Transverse colon (tissue), 4 donors: ENCODE measurements at regions of chr4 and their contacts with region 1.

Region 1: DNA sequence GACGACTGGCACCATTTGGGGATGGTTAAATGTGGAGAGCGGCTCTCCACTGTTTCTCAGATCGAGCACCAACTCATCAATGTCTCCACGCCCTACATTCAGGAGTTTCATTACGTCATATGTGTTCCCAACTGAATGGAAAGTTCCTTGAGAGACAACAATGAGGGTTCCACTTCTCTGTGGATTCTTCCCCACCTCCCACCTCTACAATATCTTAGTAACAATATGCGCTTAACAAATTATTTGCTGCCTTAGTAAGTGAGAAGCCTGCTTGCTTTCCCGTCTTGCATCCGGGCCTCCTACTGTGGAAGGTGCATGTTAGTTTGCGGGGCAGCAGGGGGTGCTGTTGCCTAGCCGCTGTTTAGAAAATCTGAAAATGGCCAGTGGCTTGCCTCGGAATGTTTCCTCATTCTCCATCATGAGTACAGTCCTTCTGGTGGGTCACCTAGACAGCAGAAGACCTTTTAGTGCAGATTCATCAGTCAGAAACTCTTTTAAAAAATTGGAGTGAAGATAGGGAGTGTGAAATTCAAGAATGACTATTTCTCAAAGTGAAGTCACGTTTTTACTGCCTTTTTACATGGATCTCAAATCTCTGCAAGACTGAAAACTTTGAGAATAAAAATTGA is 55.7 kb downstream of the PHOX2B start:
- DNase-seq: peak; percentile 46
- H3K4me3 ChIP-seq: no peak overlapping the region
- H3K27ac ChIP-seq: no peak overlapping the region
- H3K4me1 ChIP-seq: no peaks in the 10 kb centered on the region
- H3K27me3 ChIP-seq: no peaks in the 10 kb centered on the region
- CTCF ChIP-seq: peak; percentile 79 to 81 (median 81)
- EP300 ChIP-seq: no peak
- POLR2A ChIP-seq: no peak

Region 2: DNA sequence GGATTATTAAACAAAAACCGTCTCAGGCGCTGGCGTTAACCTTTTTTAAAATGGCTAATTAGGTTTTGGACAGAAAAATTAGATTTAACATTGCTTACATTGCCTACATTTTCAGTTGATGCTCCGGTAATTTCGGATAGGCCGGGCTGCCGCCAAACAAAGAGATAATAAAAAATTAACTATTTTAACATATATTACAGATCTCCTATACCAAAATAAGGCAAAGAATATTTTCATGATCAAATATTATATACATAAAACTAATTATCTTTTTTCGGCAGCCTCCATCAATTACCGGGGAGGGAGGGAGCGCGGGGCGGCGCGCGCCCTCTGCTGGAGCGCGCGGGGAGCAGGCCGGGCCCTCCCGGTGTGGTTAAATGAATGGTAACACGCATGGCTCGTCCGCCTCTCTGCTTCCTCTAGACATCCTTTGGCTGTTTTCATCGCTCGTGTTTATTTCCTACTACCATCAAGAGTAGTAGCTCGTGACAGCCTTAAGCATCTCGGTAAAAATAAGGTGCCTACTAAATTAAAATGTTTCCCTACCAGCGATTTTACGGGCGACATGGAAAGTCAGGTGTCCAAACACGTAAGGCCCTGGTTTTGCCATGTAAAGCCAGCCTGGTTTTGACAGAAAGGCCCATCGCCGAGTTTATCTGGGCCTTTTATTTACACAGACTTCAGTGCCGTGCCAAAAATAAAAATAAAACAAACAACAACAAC is 190.0 kb after region 1 on chr4:
- in situ Hi-C with region 1: loop called (anchors 5 kb)
- intact Hi-C with region 1: loop called (anchors 5 kb)
- DNase-seq: no peak
- H3K4me3 ChIP-seq: peak overlapping the region in 3 of 4 donors; percentile 6 to 46 (median 23)
- H3K27ac ChIP-seq: no peak overlapping the region
- H3K4me1 ChIP-seq: peaks cover 6 to 23% (median 19%) of the 10 kb centered on the region in 4 donors
- H3K27me3 ChIP-seq: peaks cover 92% of the 10 kb centered on the region
- CTCF ChIP-seq: peak; percentile 68 to 95 (median 93)
- EP300 ChIP-seq: no peak
- POLR2A ChIP-seq: no peak

Region 3: DNA sequence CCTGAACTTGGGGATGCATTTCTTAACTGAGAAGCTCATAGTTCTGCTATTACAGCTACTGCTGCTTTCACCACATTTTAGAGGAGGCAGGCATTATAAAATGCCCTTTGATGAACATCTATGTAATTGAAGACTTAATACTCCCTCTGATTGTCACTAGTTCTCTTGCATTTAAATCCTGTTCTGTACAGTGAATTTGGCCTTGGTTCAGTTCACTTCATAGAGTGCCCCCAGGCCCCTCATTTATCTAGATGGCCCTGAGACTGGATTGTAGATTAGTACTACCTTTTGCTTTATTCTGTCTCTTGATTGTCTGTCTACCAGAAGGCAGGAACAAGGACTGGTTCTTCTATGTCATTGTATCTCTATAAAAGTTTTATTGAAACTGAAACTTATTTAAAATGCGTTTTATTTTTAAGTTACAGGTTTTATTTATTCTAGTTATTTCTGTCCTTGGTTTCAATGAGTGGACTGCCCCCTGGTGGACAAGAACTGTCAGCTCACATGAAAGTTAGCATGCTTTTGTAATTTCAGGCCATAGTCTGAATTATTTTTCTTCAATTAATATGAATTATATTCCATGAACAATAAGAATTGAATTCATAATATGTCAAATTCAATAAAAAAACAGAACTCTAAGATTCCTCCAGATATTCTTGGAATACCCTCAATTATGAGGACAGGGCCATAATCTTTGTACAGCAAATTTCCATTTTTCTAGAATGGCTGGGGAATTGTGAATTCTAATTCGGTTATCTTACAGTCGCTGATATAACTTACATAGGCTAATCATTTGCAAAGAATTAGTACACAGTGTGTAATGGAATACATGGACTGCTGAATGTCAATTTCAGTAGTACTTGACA is 195.2 kb after region 1 on chr4:
- in situ Hi-C with region 1: loop called (anchors 5 kb)
- intact Hi-C with region 1: loop called (anchors 5 kb)
- DNase-seq: peak; percentile 21
- H3K4me3 ChIP-seq: no peak overlapping the region
- H3K27ac ChIP-seq: no peak overlapping the region
- H3K4me1 ChIP-seq: no peaks in the 10 kb centered on the region
- H3K27me3 ChIP-seq: peaks cover 54% of the 10 kb centered on the region
- CTCF ChIP-seq: peak; percentile 61 to 93 (median 90)
- EP300 ChIP-seq: no peak
- POLR2A ChIP-seq: no peak